ENCODE measurements at regions of chr7 and their contacts with region 1.

Region 1: DNA sequence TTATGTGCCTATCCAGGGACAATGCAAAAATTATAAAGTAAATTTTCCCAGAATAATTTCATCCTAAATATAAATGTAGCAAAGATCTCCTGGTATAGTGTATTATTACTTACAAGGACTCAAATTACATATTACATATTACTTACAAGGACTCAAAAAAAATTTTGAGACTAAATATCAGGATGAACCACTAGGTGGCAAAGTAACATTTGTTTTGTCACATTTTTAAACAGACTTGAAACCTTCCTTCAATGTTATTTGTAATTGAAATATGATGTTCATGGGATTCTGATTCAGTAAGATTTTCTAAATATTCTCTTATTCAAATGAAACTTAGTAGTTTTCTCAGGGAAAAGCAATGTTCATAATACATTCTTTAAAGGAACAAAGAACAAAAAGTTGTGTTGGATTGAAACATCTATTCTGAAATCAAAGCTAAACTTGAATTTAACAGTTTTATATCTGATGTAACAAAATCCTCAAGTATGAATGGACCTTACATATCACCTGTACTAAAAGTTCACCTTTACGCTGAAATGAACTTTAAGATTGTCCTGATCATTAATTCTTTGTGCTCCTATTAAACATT is 74.3 kb upstream of the GNAI1 start:
- DNase-seq: peak; percentile 63
- ATAC-seq: no peak
- H3K4me3 ChIP-seq: no peak overlapping the region
- H3K27ac ChIP-seq: no peak overlapping the region
- H3K4me1 ChIP-seq: no peaks in the 10 kb centered on the region
- H3K27me3 ChIP-seq: no peaks in the 10 kb centered on the region
- CTCF ChIP-seq: peak; percentile 29 to 69 (median 64)
- POLR2A ChIP-seq: no peak
- RAD21 ChIP-seq: peak; percentile 79

Region 2: DNA sequence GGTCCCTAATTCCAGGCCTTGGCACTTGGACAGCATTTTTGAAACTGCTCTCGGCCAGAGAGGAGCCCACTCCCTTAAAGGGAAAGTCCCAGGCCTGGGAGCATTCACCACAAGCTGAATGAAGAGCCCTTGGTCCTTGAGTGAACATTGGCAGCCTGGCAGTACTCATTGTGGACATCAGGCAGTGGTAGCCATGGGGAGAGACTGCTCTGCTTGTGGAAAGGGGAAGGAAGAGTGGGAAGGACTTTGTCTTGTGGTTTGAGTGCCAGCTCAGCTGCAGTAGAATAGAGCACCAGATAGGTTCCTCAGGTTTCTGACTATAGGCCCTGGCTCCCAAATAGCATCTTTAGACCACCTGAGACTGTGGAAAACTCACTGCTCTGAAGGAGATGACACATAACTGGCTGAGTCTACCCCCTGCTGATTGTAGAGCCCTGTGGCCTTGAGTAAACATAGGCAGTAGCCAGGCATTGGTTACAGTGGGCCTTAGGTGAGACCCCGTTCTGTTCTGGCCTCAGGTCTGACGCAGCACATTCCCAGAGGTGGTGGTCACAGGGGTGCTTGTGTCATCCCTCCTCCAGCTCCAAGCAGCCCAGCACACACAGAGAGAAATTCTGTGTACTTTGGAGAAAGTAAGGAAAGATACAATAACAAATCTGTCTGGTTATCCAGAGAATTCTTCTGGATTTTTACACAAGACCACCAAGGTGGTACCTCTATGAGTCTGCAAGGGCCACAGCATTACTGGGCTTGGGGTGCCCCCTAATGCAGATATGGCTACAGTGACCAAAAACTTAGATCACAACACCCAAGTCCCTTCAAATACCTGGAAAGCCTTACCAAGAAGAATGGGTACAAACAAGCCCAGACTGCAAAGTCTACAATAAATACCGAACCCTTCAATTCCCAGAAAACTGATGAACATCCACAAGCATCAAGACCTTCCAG is 228.1 kb after region 1 on chr7:
- CTCF ChIA-PET with region 1: no interaction called
- POLR2A ChIA-PET with region 1: no interaction called
- RAD21 ChIA-PET with region 1: no interaction called
- intact Hi-C with region 1: loop called (anchors 5 kb)
- DNase-seq: no peak
- ATAC-seq: peak; percentile 70
- H3K4me3 ChIP-seq: no peak overlapping the region
- H3K27ac ChIP-seq: peak overlapping the region; percentile 59
- H3K4me1 ChIP-seq: peaks cover 30 to 42% of the 10 kb centered on the region in 2 experiments; a peak in 3 of 4 replicates
- H3K27me3 ChIP-seq: no peaks in the 10 kb centered on the region
- CTCF ChIP-seq: peak in 2 of 3 experiments; percentile 36 to 37; a peak in 3 of 6 replicates
- POLR2A ChIP-seq: no peak
- RAD21 ChIP-seq: peak; percentile 69

Region 3: DNA sequence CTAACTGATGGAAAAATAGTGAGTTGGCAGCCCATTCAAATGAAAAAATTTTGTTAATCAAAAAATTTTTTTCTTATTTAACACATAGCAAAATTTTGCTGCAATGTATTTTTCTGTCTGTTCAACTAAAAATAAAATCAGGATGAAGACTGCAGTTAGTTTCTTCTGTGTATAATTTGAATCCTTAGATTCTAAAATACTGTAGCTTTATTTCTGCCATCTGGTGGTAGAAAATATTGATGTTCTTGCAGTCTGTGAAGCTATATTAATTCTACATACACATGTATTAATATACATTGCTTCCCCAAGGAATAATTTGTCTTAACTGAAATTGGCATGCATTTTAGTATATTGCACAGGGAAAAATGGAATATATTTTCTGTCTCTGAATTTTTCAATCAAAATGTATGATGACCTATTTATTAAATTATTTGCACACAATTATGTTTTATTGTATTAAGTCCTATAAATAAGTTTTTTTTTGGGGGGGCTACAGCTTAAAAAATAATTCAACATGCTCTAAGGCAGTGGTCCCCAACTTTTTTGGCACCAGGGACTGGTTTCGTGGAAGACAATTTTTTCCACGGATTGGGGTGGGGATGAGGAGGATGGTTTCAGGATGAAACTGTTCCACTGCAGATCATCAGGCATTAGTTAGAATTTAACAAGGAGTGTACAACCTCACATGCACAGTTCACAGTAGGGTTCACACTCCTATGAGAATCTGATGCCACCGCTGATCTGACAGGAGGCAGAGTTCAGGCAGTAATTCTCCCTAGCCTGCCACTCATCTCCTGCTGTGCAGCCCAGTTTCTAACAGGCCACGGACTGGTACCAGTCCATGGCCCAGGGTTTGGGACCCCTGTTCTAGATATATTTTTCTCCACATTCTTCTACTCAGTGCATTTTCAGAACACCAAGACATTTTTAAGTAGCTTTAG is 332.2 kb after region 1 on chr7:
- CTCF ChIA-PET with region 1: interaction called, 11 read pairs
- POLR2A ChIA-PET with region 1: no interaction called
- RAD21 ChIA-PET with region 1: no interaction called
- intact Hi-C with region 1: loop called (anchors 10 kb)
- DNase-seq: peak; percentile 7
- ATAC-seq: no peak
- H3K4me3 ChIP-seq: no peak overlapping the region
- H3K27ac ChIP-seq: no peak overlapping the region
- H3K4me1 ChIP-seq: no peaks in the 10 kb centered on the region; a peak in 1 of 4 replicates
- H3K27me3 ChIP-seq: no peaks in the 10 kb centered on the region
- CTCF ChIP-seq: peak; percentile 27 to 49 (median 48); a peak in 4 of 6 replicates
- POLR2A ChIP-seq: no peak
- RAD21 ChIP-seq: peak; percentile 56

Region 4: GRCh38 chr7:80412842-80413241 is 352.5 kb after region 1 on chr7:
- CTCF ChIA-PET with region 1: no interaction called
- POLR2A ChIA-PET with region 1: no interaction called
- RAD21 ChIA-PET with region 1: no interaction called
- intact Hi-C with region 1: no loop called
- DNase-seq: no peak
- ATAC-seq: no peak
- H3K4me3 ChIP-seq: no peak overlapping the region
- H3K27ac ChIP-seq: no peak overlapping the region
- H3K4me1 ChIP-seq: no peaks in the 10 kb centered on the region
- H3K27me3 ChIP-seq: no peaks in the 10 kb centered on the region
- CTCF ChIP-seq: no peak
- POLR2A ChIP-seq: no peak
- RAD21 ChIP-seq: no peak

Region 5: GRCh38 chr7:80453699-80454340 is 393.5 kb after region 1 on chr7:
- CTCF ChIA-PET with region 1: interaction called, 4 read pairs
- POLR2A ChIA-PET with region 1: no interaction called
- RAD21 ChIA-PET with region 1: no interaction called
- intact Hi-C with region 1: loop called (anchors 1 kb)
- DNase-seq: peak; percentile 19
- ATAC-seq: peak; percentile 42; the same call in 1 of the 2 replicates
- H3K4me3 ChIP-seq: no peak overlapping the region
- H3K27ac ChIP-seq: no peak overlapping the region
- H3K4me1 ChIP-seq: peaks cover 3 to 14% of the 10 kb centered on the region in 2 experiments; a peak in 2 of 4 replicates
- H3K27me3 ChIP-seq: no peaks in the 10 kb centered on the region
- CTCF ChIP-seq: peak; percentile 30 to 69 (median 56); a peak in 4 of 6 replicates
- POLR2A ChIP-seq: no peak
- RAD21 ChIP-seq: peak; percentile 85

Region 6: GRCh38 chr7:80659120-80660055 is 599.1 kb after region 1 on chr7:
- CTCF ChIA-PET with region 1: interaction called, 3 read pairs
- POLR2A ChIA-PET with region 1: no interaction called
- RAD21 ChIA-PET with region 1: no interaction called
- intact Hi-C with region 1: loop called (anchors 5 kb)
- DNase-seq: peak; percentile 31
- ATAC-seq: peak; percentile 52; the same call in 1 of the 2 replicates
- H3K4me3 ChIP-seq: no peak overlapping the region
- H3K27ac ChIP-seq: no peak overlapping the region
- H3K4me1 ChIP-seq: peaks cover 0 to 7% of the 10 kb centered on the region in 2 experiments; a peak in 1 of 4 replicates
- H3K27me3 ChIP-seq: no peaks in the 10 kb centered on the region
- CTCF ChIP-seq: peak; percentile 48 to 77 (median 48); a peak in 5 of 6 replicates
- POLR2A ChIP-seq: no peak
- RAD21 ChIP-seq: peak; percentile 74

Region 7: GRCh38 chr7:81457852-81458522 is 1397.7 kb after region 1 on chr7:
- CTCF ChIA-PET with region 1: no interaction called
- POLR2A ChIA-PET with region 1: no interaction called
- RAD21 ChIA-PET with region 1: no interaction called
- intact Hi-C with region 1: loop called (anchors 10 kb)
- DNase-seq: peak; percentile 13
- ATAC-seq: no peak
- H3K4me3 ChIP-seq: no peak overlapping the region
- H3K27ac ChIP-seq: no peak overlapping the region
- H3K4me1 ChIP-seq: no peaks in the 10 kb centered on the region
- H3K27me3 ChIP-seq: no peaks in the 10 kb centered on the region
- CTCF ChIP-seq: peak in 2 of 3 experiments; percentile 24 to 49; a peak in 4 of 6 replicates
- POLR2A ChIP-seq: no peak
- RAD21 ChIP-seq: peak; percentile 71

Measured in HCT116 (cell line).